ENCODE measurements at regions of chr9 and their contacts with region 1.

Region 1: DNA sequence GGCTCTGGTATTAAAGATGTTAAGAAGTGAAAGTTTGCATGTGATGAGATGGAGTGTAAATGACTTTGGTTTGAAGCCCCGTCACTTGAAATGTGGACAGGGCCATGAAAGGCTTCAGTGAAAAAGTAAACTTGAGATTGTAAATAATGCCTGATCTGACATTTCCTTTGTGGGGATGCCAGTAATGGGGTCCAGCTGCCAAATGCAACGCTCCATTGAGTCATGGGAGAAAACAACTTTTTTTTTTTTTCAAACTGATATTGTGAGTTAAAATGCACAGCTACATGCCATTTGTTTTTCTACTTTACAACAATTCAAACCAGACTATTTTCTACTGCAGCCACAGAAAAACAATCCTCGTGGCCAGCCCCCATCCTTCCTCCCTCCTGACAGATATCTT is 327.0 kb upstream of the TNC start:
- DNase-seq: no peak
- H3K4me3 ChIP-seq: no peak overlapping the region
- H3K27ac ChIP-seq: peak overlapping the region; percentile 71
- H3K4me1 ChIP-seq: peaks cover 0 to 37% (median 5%) of the 10 kb centered on the region in 4 donors
- H3K27me3 ChIP-seq: no peaks in the 10 kb centered on the region
- CTCF ChIP-seq: no peak

Region 2: DNA sequence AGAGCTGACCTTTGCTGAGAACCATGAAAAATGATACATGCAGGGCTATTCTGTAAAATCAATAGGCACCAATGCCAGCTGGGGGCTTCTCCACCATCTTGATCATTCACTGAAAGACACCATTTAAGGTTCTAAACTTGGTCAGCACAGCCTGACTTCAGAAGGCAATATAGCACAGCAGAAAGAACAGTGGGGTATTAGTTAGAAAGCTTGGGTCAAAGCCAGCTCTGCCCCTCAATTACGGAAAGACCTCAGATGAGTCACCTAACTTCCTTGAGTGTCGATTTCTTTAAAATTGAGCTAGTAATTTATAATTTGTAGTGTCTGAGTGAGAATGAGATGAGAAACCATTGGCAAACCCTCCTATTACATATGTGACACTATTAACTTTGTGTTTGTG is 330.4 kb before region 1 on chr9:
- intact Hi-C with region 1: loop called (anchors 5 kb)
- DNase-seq: no peak
- H3K4me3 ChIP-seq: peak overlapping the region; percentile 53 to 57
- H3K27ac ChIP-seq: peak overlapping the region; percentile 76 to 85
- H3K4me1 ChIP-seq: peaks cover 0 to 67% (median 22%) of the 10 kb centered on the region in 4 donors
- H3K27me3 ChIP-seq: no peaks in the 10 kb centered on the region
- CTCF ChIP-seq: no peak

Measured in tibial artery (tissue), 4 donors.